AG04450 (cell line): ENCODE measurements at regions of chr2 and their contacts with region 1.

Region 1: DNA sequence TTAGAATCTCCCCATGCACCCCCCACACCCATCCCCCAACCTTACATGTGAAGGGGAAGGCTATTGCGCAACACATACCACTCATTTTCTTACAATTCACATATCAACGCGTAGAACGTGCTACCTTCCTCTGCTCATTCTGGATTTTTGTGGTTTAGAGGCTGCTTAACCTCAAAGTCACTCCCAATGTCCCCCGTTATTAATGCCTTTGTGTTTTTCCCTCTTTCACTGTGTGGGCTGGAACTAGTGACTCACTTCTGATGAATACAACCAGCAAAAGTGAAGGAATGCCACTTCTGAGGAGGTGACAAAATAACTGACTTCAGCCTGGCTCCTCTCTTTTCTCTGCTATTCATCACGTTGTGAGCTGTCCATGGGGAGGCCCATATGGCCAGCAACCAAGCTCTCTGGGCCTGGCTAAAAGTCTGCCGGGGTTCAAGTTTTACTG is 342.5 kb upstream of the NXPH2 start:
- DNase-seq: no peak
- H3K4me3 ChIP-seq: no peak overlapping the region
- H3K27ac ChIP-seq: no peak overlapping the region
- H3K27me3 ChIP-seq: no peaks in the 10 kb centered on the region
- CTCF ChIP-seq: no peak

Region 2: GRCh38 chr2:138846223-138846821 is 276.4 kb before region 1 on chr2:
- CTCF ChIA-PET with region 1: interaction called, 10 read pairs
- POLR2A ChIA-PET with region 1: no interaction called
- DNase-seq: no peak
- H3K4me3 ChIP-seq: no peak overlapping the region
- H3K27ac ChIP-seq: no peak overlapping the region
- H3K27me3 ChIP-seq: no peaks in the 10 kb centered on the region
- CTCF ChIP-seq: peak; percentile 72

Region 3: GRCh38 chr2:139142252-139142880 is 19.6 kb after region 1 on chr2:
- CTCF ChIA-PET with region 1: no interaction called
- POLR2A ChIA-PET with region 1: no interaction called
- DNase-seq: no peak
- H3K4me3 ChIP-seq: no peak overlapping the region
- H3K27ac ChIP-seq: no peak overlapping the region
- H3K27me3 ChIP-seq: no peaks in the 10 kb centered on the region
- CTCF ChIP-seq: no peak

Region 4: DNA sequence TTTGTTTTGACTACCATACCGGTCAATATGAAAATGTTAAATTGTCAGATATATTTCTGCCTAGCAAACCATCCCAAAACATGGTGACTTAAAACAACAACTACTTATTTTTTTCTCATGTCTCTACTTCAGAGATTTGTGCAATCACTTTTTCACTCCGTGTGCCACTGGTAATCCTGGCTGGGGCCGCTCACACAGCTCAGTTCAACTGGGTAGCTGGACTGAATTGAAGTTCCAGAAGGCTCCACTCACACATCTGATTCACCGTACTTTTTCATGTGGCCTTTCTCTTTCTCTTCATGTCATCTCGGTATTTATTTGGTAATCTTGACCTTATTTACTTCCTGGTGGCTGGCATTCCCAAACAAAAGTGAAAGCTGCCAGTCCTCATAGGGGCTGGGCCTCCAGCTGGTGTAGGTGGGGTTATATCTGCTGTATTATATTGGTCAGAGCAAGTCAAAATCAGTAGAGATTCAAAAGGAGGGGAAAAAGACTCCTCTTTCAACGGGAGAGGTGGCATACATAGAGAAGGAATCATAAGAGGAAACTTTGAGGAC is 171.3 kb after region 1 on chr2:
- CTCF ChIA-PET with region 1: no interaction called
- POLR2A ChIA-PET with region 1: no interaction called
- DNase-seq: no peak
- H3K4me3 ChIP-seq: no peak overlapping the region
- H3K27ac ChIP-seq: no peak overlapping the region
- H3K27me3 ChIP-seq: no peaks in the 10 kb centered on the region
- CTCF ChIP-seq: no peak